BJ (cell line): ENCODE measurements at regions of chr15 and their contacts with region 1.

Region 1: GRCh38 chr15:65077981-65078352 is 1.4 kb downstream of the KBTBD13 start:
- DNase-seq: no peak
- H3K4me3 ChIP-seq: no peak overlapping the region
- H3K27me3 ChIP-seq: peaks cover 15% of the 10 kb centered on the region
- CTCF ChIP-seq: peak; percentile 81

Region 2: GRCh38 chr15:64893481-64894394 is 184.2 kb before region 1 on chr15:
- CTCF ChIA-PET with region 1: no interaction called
- POLR2A ChIA-PET with region 1: no interaction called
- DNase-seq: peak; percentile 39
- H3K4me3 ChIP-seq: no peak overlapping the region
- H3K27me3 ChIP-seq: no peaks in the 10 kb centered on the region
- CTCF ChIP-seq: no peak

Region 3: DNA sequence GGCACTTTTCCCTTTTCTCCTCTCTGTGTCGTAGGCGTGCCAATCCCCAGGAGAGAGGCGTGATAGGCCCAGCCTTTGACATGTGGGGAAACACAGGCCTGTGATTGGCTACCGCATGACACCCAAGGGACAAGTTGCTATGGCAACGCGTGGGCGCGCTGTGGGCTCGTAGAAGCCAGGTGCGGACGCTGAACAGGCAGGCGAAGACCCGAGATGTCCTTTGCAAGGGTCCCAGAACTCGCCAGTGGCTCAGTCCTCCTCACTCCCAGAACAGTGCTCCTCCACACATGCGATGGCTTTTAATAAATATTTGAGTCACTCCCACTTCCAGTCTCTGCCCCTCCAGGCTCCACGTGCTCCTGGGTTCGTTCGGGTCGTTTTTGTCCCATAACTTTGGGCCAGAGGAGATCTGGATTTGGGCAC is 28.5 kb before region 1 on chr15:
- CTCF ChIA-PET with region 1: interaction called, 301 read pairs
- POLR2A ChIA-PET with region 1: no interaction called
- DNase-seq: peak; percentile 65
- H3K4me3 ChIP-seq: peak overlapping the region; percentile 17
- H3K27me3 ChIP-seq: no peaks in the 10 kb centered on the region
- CTCF ChIP-seq: no peak

Region 4: DNA sequence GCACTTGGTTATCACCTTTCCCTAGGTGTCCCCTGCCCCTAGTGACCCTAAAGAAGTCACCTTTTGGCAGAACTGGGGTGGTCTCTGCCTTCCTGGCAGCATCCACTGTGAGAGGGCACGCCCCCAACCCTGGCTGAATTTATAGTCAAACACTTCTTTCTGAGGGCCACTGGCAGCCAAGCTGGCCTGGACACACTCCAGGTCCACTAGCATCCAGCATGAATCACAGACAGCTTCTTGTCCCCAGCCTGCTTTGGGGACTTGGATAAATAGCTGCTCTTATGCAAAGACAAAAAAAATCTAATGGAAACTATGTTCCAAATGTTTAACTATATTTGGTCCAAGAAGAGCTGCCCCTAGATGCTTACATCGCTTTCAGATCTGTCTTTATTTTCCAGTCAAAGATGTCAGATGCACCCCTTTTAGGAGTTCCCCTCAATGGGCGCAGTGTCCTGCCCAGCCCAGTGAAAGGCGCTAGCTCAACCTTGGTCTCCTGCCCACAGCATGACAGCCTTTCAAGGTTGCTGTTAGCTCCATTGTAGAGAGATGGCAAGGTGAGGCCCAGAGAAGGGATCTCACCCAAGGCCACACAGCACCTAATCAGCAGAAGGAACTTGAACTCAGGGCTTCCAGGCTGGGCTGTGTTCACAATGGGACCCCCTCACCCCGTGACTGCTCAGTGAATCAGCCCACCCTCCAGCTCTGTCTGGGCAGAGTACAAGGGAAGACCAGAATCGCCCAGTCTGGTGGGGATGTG is 17.1 kb before region 1 on chr15:
- CTCF ChIA-PET with region 1: interaction called, 301 read pairs
- POLR2A ChIA-PET with region 1: no interaction called
- DNase-seq: no peak
- H3K4me3 ChIP-seq: no peak overlapping the region
- H3K27me3 ChIP-seq: peaks cover 22% of the 10 kb centered on the region
- CTCF ChIP-seq: no peak

Region 5: DNA sequence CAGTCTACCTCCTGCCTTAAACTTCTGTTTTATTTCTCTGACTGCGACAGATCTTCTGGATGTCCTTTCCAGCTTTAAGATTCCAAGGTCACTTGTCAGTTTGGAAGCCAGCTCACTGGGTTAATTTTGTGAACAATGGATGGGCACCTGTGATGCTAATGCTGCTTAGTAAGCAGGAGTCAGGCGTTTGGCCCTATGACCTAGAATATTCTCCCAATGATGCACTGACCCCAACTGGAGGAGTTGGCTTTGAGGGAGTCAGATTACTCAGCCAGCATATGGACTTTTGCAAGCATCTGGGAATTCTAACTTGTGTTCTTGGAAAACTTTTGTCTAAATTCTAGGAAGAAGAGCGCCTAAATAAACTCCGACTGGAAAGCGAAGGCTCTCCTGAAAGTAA is 480.4 kb after region 1 on chr15:
- CTCF ChIA-PET with region 1: no interaction called
- POLR2A ChIA-PET with region 1: no interaction called
- DNase-seq: no peak
- H3K4me3 ChIP-seq: no peak overlapping the region
- H3K27me3 ChIP-seq: no peaks in the 10 kb centered on the region
- CTCF ChIP-seq: no peak